ENCODE measurements at regions of chrX and their contacts with region 1.

Region 1: GRCh38 chrX:150049647-150050046 is 111.4 kb upstream of the EOLA2 start:
- DNase-seq: no peak
- ATAC-seq: no peak
- H3K4me3 ChIP-seq: no peak overlapping the region
- H3K27ac ChIP-seq: no peak overlapping the region
- H3K4me1 ChIP-seq: no peaks in the 10 kb centered on the region; the same call in 1 of the 2 replicates
- H3K27me3 ChIP-seq: no peaks in the 10 kb centered on the region
- CTCF ChIP-seq: no peak

Region 2: DNA sequence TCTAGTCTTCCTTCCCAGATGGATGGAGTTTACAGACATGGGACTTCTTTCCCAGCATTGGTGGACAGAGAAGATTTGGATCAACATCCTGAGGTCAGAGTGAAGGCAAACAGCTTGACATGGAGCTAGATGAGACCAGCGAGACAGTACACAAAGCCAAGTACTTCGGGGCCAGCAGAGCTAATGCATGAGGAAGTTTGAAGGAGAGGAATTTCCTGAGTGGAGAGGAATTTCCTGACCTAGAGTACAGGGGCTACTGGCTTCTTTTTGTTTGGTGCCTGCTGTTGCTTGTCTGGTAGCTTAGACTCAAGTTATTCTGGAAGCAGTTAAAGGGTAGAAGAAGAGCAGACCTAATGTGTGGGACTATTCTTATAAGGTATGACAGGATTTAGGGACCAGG is 42.3 kb before region 1 on chrX:
- CTCF ChIA-PET with region 1: no interaction called
- POLR2A ChIA-PET with region 1: no interaction called
- in situ Hi-C with region 1: no loop called
- intact Hi-C with region 1: no loop called
- DNase-seq: no peak
- ATAC-seq: no peak
- H3K4me3 ChIP-seq: no peak overlapping the region
- H3K27ac ChIP-seq: no peak overlapping the region
- H3K4me1 ChIP-seq: no peaks in the 10 kb centered on the region
- H3K27me3 ChIP-seq: no peaks in the 10 kb centered on the region
- CTCF ChIP-seq: no peak

Region 3: DNA sequence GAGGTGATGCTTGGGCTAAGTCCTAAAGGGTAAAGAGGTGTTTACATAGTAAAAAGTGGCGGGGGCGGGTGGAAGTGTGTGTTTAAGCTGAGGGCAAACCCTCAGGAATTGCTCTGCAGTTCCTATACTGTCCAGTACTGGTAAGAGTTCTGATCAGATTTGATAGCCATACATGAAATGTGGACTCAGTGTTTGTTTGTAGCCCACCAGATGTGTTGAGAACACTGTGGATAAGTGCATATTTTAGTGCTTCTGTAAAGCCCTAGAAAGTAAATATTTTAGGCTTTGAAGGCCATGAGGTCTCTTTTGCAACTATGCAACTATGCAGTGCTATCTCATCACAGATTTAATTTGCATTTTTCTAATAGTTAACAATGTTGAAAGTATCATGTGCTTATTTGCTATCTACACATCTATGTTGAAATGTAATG is 30.7 kb before region 1 on chrX:
- CTCF ChIA-PET with region 1: no interaction called
- POLR2A ChIA-PET with region 1: no interaction called
- in situ Hi-C with region 1: no loop called
- intact Hi-C with region 1: no loop called
- DNase-seq: no peak
- ATAC-seq: no peak
- H3K4me3 ChIP-seq: no peak overlapping the region
- H3K27ac ChIP-seq: no peak overlapping the region
- H3K4me1 ChIP-seq: peaks cover 3% of the 10 kb centered on the region; the same call in 1 of the 2 replicates
- H3K27me3 ChIP-seq: no peaks in the 10 kb centered on the region
- CTCF ChIP-seq: no peak

Region 4: GRCh38 chrX:150192816-150193215 is 143.2 kb after region 1 on chrX:
- CTCF ChIA-PET with region 1: no interaction called
- POLR2A ChIA-PET with region 1: no interaction called
- in situ Hi-C with region 1: no loop called
- intact Hi-C with region 1: loop called (anchors 1 kb)
- DNase-seq: no peak
- ATAC-seq: no peak
- H3K4me3 ChIP-seq: no peak overlapping the region
- H3K27ac ChIP-seq: no peak overlapping the region
- H3K4me1 ChIP-seq: no peaks in the 10 kb centered on the region
- H3K27me3 ChIP-seq: no peaks in the 10 kb centered on the region
- CTCF ChIP-seq: no peak

Region 5: GRCh38 chrX:150476181-150476699 is 426.6 kb after region 1 on chrX:
- CTCF ChIA-PET with region 1: no interaction called
- POLR2A ChIA-PET with region 1: no interaction called
- in situ Hi-C with region 1: no loop called
- intact Hi-C with region 1: no loop called
- DNase-seq: no peak
- ATAC-seq: no peak
- H3K4me3 ChIP-seq: no peak overlapping the region
- H3K27ac ChIP-seq: no peak overlapping the region
- H3K4me1 ChIP-seq: no peaks in the 10 kb centered on the region
- H3K27me3 ChIP-seq: no peaks in the 10 kb centered on the region
- CTCF ChIP-seq: no peak